Activated T-helper 2 cell treated with anti-CD3 and anti-CD28 coated beads, Interferon-gamma antibody, Interleukin-2, Interleukin-4, amounts not matched to agents 10 μg/mL and 5 μg/mL and 100 μg/mL, durations not matched to agents 14 hours and 24 hours and 36 hours (primary cell): ENCODE measurements at regions of chr7 and their contacts with region 1.

Region 1: GRCh38 chr7:28955718-28956619 is 2.2 kb downstream of the TRIL start:
- DNase-seq: no peak
- H3K4me3 Mint-ChIP-seq: no peak overlapping the region
- H3K27ac Mint-ChIP-seq: no peak overlapping the region
- H3K4me1 Mint-ChIP-seq: peaks cover 3% of the 10 kb centered on the region
- H3K27me3 Mint-ChIP-seq: peaks cover 65% of the 10 kb centered on the region

Region 2: GRCh38 chr7:27150568-27151340 is 1805.2 kb before region 1 on chr7:
- intact Hi-C with region 1: loop called (anchors 10 kb)
- DNase-seq: peak; percentile 55
- H3K4me3 Mint-ChIP-seq: peak overlapping the region; percentile 60
- H3K27ac Mint-ChIP-seq: no peak overlapping the region
- H3K4me1 Mint-ChIP-seq: peaks cover 17% of the 10 kb centered on the region
- H3K27me3 Mint-ChIP-seq: peaks cover 88% of the 10 kb centered on the region

Region 3: DNA sequence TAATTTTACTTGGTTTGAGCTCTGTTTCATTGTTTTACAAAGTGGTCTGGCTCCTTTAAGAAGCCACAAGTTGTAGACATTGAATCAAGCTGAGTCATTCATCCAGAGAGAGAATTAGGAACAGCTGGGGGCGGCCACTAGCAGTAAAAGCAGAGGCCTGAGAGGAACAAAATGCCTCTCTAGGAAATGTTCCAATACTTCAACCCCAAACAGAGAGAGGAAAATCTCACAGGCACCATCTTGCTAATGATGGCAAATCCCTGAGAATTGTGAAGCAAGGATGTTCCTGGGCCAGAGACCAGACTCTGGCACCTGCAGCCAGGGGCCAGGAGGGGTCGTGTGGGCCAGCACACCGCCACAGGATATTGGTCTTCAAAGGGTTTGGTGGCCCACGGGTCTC is 28.7 kb after region 1 on chr7:
- intact Hi-C with region 1: no loop called
- DNase-seq: no peak
- H3K4me3 Mint-ChIP-seq: no peak overlapping the region
- H3K27ac Mint-ChIP-seq: no peak overlapping the region
- H3K4me1 Mint-ChIP-seq: no peaks in the 10 kb centered on the region
- H3K27me3 Mint-ChIP-seq: peaks cover 1% of the 10 kb centered on the region

Region 4: GRCh38 chr7:29564496-29565223 is 608.7 kb after region 1 on chr7:
- intact Hi-C with region 1: loop called (anchors 5 kb)
- DNase-seq: no peak
- H3K4me3 Mint-ChIP-seq: peak overlapping the region; percentile 65
- H3K27ac Mint-ChIP-seq: no peak overlapping the region
- H3K4me1 Mint-ChIP-seq: peaks cover 15% of the 10 kb centered on the region
- H3K27me3 Mint-ChIP-seq: peaks cover 79% of the 10 kb centered on the region